Transverse colon (tissue), 4 donors: ENCODE measurements at regions of chr1 and their contacts with region 1.

Region 1: GRCh38 chr1:185432948-185433347 is 115.9 kb upstream of the IVNS1ABP start:
- DNase-seq: no peak
- H3K4me3 ChIP-seq: no peak overlapping the region
- H3K27ac ChIP-seq: no peak overlapping the region
- H3K4me1 ChIP-seq: no peaks in the 10 kb centered on the region
- H3K27me3 ChIP-seq: no peaks in the 10 kb centered on the region
- CTCF ChIP-seq: no peak
- EP300 ChIP-seq: no peak
- POLR2A ChIP-seq: no peak

Region 2: DNA sequence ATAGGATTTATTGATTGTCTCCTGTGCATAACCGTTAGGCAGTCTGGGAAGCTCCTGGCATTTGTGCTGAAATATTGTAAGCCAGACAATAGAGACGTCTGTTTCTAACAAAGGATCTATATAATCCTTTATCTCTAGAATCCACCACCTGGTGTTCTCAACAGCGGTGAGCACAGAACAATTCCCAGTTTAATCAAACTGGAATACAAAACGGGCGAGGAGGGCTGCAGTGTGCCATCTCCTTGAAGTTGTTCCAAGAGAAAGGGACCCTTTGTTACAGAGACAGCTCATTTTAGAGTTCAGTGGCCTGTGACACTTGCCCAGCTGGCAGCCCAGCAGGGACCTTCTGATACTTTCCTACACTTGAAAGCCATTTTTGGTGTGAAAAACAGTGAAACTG is 46.8 kb after region 1 on chr1:
- in situ Hi-C with region 1: no loop called
- intact Hi-C with region 1: loop called (anchors 2 kb)
- DNase-seq: no peak
- H3K4me3 ChIP-seq: no peak overlapping the region
- H3K27ac ChIP-seq: peak overlapping the region in 2 of 4 donors; percentile 65 to 78
- H3K4me1 ChIP-seq: peaks cover 4 to 43% (median 12%) of the 10 kb centered on the region in 4 donors
- H3K27me3 ChIP-seq: no peaks in the 10 kb centered on the region
- CTCF ChIP-seq: no peak
- EP300 ChIP-seq: no peak
- POLR2A ChIP-seq: no peak